H1 (cell line): ENCODE measurements at regions of chr22 and their contacts with region 1.

Region 1: DNA sequence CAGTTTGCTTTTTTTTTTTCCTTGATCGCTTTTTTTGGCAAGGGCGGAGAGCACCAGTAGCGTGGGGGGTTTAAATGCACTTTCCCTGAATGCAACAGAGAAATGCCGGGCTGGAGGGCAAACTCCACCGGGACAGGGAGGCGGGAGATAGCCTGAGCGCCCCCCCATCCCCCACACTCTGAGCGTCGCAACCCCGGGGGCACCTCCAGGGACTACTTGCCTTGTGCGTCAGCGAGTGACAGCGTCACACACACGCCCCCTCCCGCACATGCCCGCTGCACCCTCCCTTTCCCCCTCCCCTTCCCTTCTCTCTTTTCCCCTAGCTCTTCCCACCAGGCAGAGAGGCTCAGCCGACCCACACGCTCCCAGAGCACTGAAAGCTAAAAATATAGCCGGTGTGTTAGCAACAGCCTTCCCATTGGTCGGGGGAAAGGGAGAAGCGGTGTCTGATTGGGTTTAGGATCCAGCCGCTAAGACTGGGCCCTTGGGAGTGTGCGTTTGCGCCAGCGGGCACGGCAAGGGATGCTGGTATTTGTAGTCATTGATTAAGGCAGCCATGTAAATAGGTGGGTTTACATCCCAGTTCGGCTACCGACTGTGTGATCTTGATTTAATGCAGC is 1.7 kb upstream of the TOB2 start:
- DNase-seq: peak; percentile 87 to 97
- H3K4me3 ChIP-seq: peak overlapping the region; percentile 67 to 100 (median 96)
- H3K27ac ChIP-seq: peak overlapping the region; percentile 96
- H3K4me1 ChIP-seq: peaks cover 0 to 7% (median 4%) of the 10 kb centered on the region in 4 experiments; a peak in 5 of 7 replicates
- H3K27me3 ChIP-seq: no peaks in the 10 kb centered on the region
- CTCF ChIP-seq: no peak
- EP300 ChIP-seq: no peak
- POLR2A ChIP-seq: peak in 1 of 2 experiments; percentile 40; a peak in 1 of 3 replicates
- RAD21 ChIP-seq: 0 out of 4 replicates have a peak, but pooled peaks of 1 of the 2 experiments have one; percentile 3

Region 2: GRCh38 chr22:41264408-41264941 is 183.8 kb before region 1 on chr22:
- CTCF ChIA-PET with region 1: no interaction called
- POLR2A ChIA-PET with region 1: no interaction called
- DNase-seq: no peak
- H3K4me3 ChIP-seq: no peak overlapping the region
- H3K27ac ChIP-seq: no peak overlapping the region
- H3K4me1 ChIP-seq: no peaks in the 10 kb centered on the region
- H3K27me3 ChIP-seq: no peaks in the 10 kb centered on the region
- CTCF ChIP-seq: no peak
- EP300 ChIP-seq: no peak
- POLR2A ChIP-seq: no peak
- RAD21 ChIP-seq: no peak

Region 3: GRCh38 chr22:41320416-41321240 is 127.7 kb before region 1 on chr22:
- CTCF ChIA-PET with region 1: no interaction called
- POLR2A ChIA-PET with region 1: no interaction called
- DNase-seq: no peak
- H3K4me3 ChIP-seq: no peak overlapping the region
- H3K27ac ChIP-seq: no peak overlapping the region
- H3K4me1 ChIP-seq: no peaks in the 10 kb centered on the region
- H3K27me3 ChIP-seq: no peaks in the 10 kb centered on the region
- CTCF ChIP-seq: no peak
- EP300 ChIP-seq: no peak
- POLR2A ChIP-seq: no peak
- RAD21 ChIP-seq: no peak

Region 4: DNA sequence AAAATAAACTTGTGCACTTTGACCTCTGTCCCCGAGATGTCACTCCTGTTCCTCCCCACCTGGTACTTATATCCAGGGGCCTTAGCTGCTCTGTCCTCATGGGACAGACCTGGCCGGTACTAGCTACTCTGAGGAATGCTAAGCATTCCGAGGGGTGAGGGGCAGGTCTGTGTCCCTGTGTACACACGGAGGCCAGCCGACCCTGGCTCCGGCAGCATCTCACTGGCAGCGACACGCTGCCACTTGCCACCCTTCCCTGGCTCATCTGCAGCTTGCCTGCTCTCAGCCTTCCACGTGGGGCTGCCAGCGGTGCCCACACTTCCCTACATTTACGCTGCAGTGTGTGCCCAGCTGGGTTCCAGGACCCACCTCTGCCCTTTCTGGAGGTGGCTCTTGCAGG is 88.2 kb before region 1 on chr22:
- CTCF ChIA-PET with region 1: no interaction called
- POLR2A ChIA-PET with region 1: interaction called, 26 read pairs
- DNase-seq: peak in 1 of 2 experiments; percentile 10
- H3K4me3 ChIP-seq: peak overlapping the region in 2 of 4 experiments; percentile 12 to 21; a peak in 2 of 8 replicates
- H3K27ac ChIP-seq: peak overlapping the region; percentile 37; the same call in 1 of the 2 replicates
- H3K4me1 ChIP-seq: peaks cover 6 to 24% (median 12%) of the 10 kb centered on the region in 4 experiments
- H3K27me3 ChIP-seq: no peaks in the 10 kb centered on the region
- CTCF ChIP-seq: no peak
- EP300 ChIP-seq: peak in 1 of 2 experiments; percentile 85; a peak in 2 of 3 replicates
- POLR2A ChIP-seq: peak in 1 of 2 experiments; percentile 52; a peak in 1 of 3 replicates
- RAD21 ChIP-seq: peak; percentile 3 to 16; a peak in 2 of 4 replicates

Region 5: DNA sequence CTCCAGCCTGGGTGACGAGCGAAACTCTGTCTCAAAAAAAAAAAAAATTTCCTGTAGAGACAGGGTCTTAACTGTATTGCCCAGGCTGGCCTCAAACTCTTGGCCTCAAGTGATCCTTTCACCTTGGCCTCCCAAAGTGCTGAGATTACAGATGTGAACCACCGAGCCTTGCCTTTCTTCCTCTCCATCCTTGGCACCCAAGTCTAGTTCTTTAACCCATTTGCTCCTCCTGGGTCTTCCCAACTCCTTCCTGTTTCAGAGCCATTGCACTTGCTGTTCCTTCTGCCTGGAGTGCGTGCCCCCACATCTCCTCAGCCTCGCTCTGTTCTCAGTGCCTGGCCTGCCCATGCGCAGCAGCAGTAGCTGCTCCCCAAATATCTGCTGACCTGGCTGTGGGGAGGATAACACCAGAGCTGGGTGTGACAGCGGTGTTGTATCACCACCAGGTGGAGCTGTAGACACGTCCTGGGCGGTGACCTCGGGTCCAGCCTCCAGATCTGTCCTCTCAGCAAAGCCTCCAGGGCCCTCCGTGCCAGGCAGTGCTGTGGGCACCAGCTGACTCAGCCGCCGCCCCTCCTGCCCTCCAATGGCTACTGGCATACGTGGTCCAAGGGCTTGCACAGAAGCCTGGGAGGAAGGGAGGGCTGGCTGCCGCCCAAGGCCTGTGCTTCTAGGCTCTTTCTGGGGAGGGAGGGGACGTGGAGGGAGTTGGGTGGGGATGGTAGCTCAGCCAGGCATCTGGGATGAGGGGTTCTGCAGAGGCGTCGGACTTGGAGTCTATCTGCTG is 44.6 kb before region 1 on chr22:
- CTCF ChIA-PET with region 1: interaction called, 13 read pairs
- POLR2A ChIA-PET with region 1: interaction called, 106 read pairs
- DNase-seq: peak; percentile 66 to 90
- H3K4me3 ChIP-seq: no peak overlapping the region
- H3K27ac ChIP-seq: no peak overlapping the region
- H3K4me1 ChIP-seq: peaks cover 0 to under 1% (median 0%) of the 10 kb centered on the region in 4 experiments; a peak in 1 of 7 replicates
- H3K27me3 ChIP-seq: no peaks in the 10 kb centered on the region
- CTCF ChIP-seq: peak; percentile 95 to 100 (median 99)
- EP300 ChIP-seq: no peak
- POLR2A ChIP-seq: no peak
- RAD21 ChIP-seq: peak; percentile 99

Region 6: GRCh38 chr22:41425660-41426365 is 22.5 kb before region 1 on chr22:
- CTCF ChIA-PET with region 1: no interaction called
- POLR2A ChIA-PET with region 1: interaction called, 33 read pairs
- DNase-seq: no peak
- H3K4me3 ChIP-seq: no peak overlapping the region
- H3K27ac ChIP-seq: no peak overlapping the region
- H3K4me1 ChIP-seq: no peaks in the 10 kb centered on the region; a peak in 1 of 7 replicates
- H3K27me3 ChIP-seq: no peaks in the 10 kb centered on the region
- CTCF ChIP-seq: no peak
- EP300 ChIP-seq: no peak
- POLR2A ChIP-seq: no peak
- RAD21 ChIP-seq: no peak

Region 7: GRCh38 chr22:41491374-41492100 is 43.2 kb after region 1 on chr22:
- CTCF ChIA-PET with region 1: no interaction called
- POLR2A ChIA-PET with region 1: interaction called, 11 read pairs
- DNase-seq: no peak
- H3K4me3 ChIP-seq: no peak overlapping the region
- H3K27ac ChIP-seq: no peak overlapping the region
- H3K4me1 ChIP-seq: peaks cover 4 to 21% (median 14%) of the 10 kb centered on the region in 4 experiments; a peak in 6 of 7 replicates
- H3K27me3 ChIP-seq: no peaks in the 10 kb centered on the region
- CTCF ChIP-seq: no peak
- EP300 ChIP-seq: no peak
- POLR2A ChIP-seq: no peak
- RAD21 ChIP-seq: no peak

Region 8: DNA sequence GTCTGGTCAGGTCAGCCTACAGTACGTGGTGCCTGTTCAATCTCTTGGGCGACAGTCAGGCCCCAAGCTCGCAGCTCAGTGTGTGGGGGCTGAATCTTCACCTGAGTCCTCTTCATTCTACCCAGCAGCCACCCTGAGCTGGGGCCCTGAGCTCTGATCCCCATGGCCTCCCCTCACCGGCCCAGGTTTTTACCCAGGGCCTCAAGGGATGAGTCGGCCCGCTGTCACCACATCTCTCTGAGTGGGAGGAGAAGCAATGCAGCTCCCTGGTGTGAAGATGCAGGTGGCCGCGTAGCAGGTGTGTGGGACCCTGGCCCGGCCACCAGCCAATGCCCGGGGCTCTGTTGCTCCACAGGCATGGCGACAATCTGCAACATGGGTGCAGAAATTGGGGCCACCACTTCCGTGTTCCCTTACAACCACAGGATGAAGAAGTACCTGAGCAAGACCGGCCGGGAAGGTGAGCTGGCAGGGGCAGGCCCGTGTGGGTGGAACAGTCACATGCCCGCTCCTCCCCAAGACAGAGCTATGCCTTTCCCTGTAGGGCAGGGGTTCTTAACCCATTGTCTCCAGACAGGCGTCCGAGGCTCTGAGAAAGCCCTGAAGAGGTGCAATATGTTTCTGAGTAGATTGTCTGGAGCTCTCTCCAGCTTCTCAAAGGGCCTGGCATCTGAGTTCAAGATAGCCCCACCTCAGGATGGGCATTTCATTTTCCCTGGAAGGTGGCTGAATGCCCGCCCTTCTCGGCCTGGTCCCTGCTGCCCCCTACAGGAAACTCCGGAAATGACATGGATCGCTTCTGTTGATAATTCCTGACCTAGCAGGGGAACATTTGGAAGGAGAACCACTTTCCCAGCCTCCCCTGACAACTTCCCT is 69.1 kb after region 1 on chr22:
- CTCF ChIA-PET with region 1: interaction called, 16 read pairs
- POLR2A ChIA-PET with region 1: interaction called, 54 read pairs
- DNase-seq: peak in 1 of 2 experiments; percentile 98
- H3K4me3 ChIP-seq: no peak overlapping the region
- H3K27ac ChIP-seq: no peak overlapping the region
- H3K4me1 ChIP-seq: peaks cover 4 to 12% (median 9%) of the 10 kb centered on the region in 4 experiments
- H3K27me3 ChIP-seq: no peaks in the 10 kb centered on the region
- CTCF ChIP-seq: peak; percentile 86 to 91 (median 91)
- EP300 ChIP-seq: no peak
- POLR2A ChIP-seq: no peak
- RAD21 ChIP-seq: peak; percentile 96 to 97

Region 9: GRCh38 chr22:41532908-41533825 is 84.9 kb after region 1 on chr22:
- CTCF ChIA-PET with region 1: interaction called, 6 read pairs
- POLR2A ChIA-PET with region 1: interaction called, 20 read pairs
- DNase-seq: peak in 1 of 2 experiments; percentile 91
- H3K4me3 ChIP-seq: no peak overlapping the region
- H3K27ac ChIP-seq: peak overlapping the region; percentile 48; the same call in 1 of the 2 replicates
- H3K4me1 ChIP-seq: peaks cover 0 to 7% (median 5%) of the 10 kb centered on the region in 4 experiments; a peak in 4 of 7 replicates
- H3K27me3 ChIP-seq: no peaks in the 10 kb centered on the region
- CTCF ChIP-seq: peak; percentile 83 to 91 (median 91)
- EP300 ChIP-seq: no peak
- POLR2A ChIP-seq: peak in 1 of 2 experiments; percentile 50; a peak in 1 of 3 replicates
- RAD21 ChIP-seq: peak; percentile 45 to 67